ENCODE measurements at regions of chr6 and their contacts with region 1.

Region 1: GRCh38 chr6:57141451-57142177 is 30.5 kb upstream of the BAG2 start:
- DNase-seq: no peak
- H3K4me3 ChIP-seq: no peak overlapping the region
- H3K27ac ChIP-seq: no peak overlapping the region
- H3K4me1 ChIP-seq: no peaks in the 10 kb centered on the region
- H3K27me3 ChIP-seq: no peaks in the 10 kb centered on the region
- CTCF ChIP-seq: no peak
- POLR2A ChIP-seq: no peak

Region 2: DNA sequence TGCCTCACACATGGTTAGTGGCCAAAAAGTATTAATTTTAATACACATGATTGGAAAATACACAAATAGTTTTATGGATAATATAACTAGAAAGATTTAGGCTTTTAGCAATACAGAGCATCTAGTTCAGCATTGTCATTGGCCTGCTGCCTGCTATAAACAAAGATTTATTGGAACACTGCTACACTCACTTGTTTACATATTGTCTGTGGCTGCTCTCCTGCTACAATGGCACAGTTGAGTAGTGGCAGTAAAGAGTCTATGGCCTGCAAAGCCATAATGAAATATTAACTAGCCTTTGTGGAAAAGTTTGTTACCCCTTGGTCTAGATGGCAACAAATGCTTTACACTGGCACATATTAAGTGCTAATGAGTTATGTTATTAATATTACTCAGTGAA is 13.9 kb before region 1 on chr6:
- intact Hi-C with region 1: loop called (anchors 2 kb)
- DNase-seq: no peak
- H3K4me3 ChIP-seq: no peak overlapping the region
- H3K27ac ChIP-seq: no peak overlapping the region
- H3K4me1 ChIP-seq: no peaks in the 10 kb centered on the region
- H3K27me3 ChIP-seq: no peaks in the 10 kb centered on the region
- CTCF ChIP-seq: no peak
- POLR2A ChIP-seq: no peak

Measured in spleen (tissue), 13 donors.